Cardiac septum (tissue), 1 donor: ENCODE measurements at regions of chr12 and their contacts with region 1.

Region 1: GRCh38 chr12:95336390-95337067 is 118.9 kb downstream of the VEZT start:
- DNase-seq: peak; percentile 83

Region 2: GRCh38 chr12:94889445-94890210 is 446.9 kb before region 1 on chr12:
- intact Hi-C with region 1: no loop called
- DNase-seq: no peak

Region 3: DNA sequence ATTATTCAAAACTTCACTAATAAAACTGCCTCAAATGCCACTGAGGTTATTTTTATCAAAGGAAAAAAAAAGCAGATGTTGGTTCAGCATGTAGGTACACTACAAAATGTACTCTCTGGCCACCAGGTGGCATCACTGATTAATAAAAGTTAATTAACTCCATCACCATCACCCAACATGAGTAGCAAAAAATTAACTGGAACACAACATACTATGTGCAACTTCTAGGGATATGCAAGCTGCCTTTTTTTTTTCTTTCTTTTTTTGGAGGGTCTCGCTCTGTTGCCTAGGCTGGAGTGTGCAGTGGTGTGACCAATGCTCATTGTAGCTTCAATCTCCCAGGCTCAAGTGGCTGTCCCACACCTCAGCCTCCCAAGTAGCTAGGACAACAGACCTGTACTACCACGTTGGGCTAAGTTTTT is 219.3 kb before region 1 on chr12:
- intact Hi-C with region 1: loop called (anchors 1 kb)
- DNase-seq: no peak